ENCODE measurements at regions of chr11 and their contacts with region 1.

Region 1: GRCh38 chr11:8318336-8318935 is 54.8 kb upstream of the LMO1 start:
- DNase-seq: peak; percentile 81
- ATAC-seq: peak; percentile 97
- H3K4me3 Mint-ChIP-seq: no peak overlapping the region
- H3K27ac Mint-ChIP-seq: no peak overlapping the region
- H3K4me1 Mint-ChIP-seq: peaks cover 2% of the 10 kb centered on the region; the same call in 1 of the 2 replicates
- H3K27me3 Mint-ChIP-seq: peaks cover 7% of the 10 kb centered on the region
- CTCF ChIP-seq: peak; percentile 84

Region 2: GRCh38 chr11:8219257-8220021 is 99.0 kb before region 1 on chr11:
- CTCF ChIA-PET with region 1: interaction called, 15 read pairs
- POLR2A ChIA-PET with region 1: no interaction called
- DNase-seq: peak; percentile 75
- ATAC-seq: peak; percentile 92
- H3K4me3 Mint-ChIP-seq: no peak overlapping the region
- H3K27ac Mint-ChIP-seq: no peak overlapping the region
- H3K4me1 Mint-ChIP-seq: peaks cover 12% of the 10 kb centered on the region
- H3K27me3 Mint-ChIP-seq: no peaks in the 10 kb centered on the region; the same call in 1 of the 2 replicates
- CTCF ChIP-seq: peak; percentile 54

Region 3: DNA sequence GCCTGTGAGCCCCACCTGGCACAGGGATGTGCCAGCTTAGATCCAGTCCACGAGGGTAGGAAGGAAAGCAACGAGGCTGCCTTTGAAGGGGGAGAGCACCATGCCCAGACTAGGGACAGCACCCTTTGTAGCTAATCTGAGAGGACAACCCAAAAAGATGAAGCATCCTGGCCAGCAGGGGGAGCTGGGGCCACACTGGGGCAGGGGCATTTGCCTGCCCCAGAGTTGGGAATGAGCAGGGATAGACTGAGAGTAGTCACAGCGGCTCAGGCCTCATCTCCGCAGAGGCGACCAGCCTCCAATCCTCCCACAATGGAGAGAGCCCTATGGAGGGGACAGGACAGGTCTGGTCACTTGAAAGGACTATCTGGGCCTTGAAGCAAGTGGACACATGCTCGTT is 71.1 kb before region 1 on chr11:
- CTCF ChIA-PET with region 1: interaction called, 10 read pairs
- POLR2A ChIA-PET with region 1: no interaction called
- DNase-seq: peak; percentile 74
- ATAC-seq: peak; percentile 43
- H3K4me3 Mint-ChIP-seq: no peak overlapping the region
- H3K27ac Mint-ChIP-seq: no peak overlapping the region
- H3K4me1 Mint-ChIP-seq: peaks cover 13% of the 10 kb centered on the region
- H3K27me3 Mint-ChIP-seq: no peaks in the 10 kb centered on the region; the same call in 1 of the 2 replicates
- CTCF ChIP-seq: peak; percentile 49

Region 4: DNA sequence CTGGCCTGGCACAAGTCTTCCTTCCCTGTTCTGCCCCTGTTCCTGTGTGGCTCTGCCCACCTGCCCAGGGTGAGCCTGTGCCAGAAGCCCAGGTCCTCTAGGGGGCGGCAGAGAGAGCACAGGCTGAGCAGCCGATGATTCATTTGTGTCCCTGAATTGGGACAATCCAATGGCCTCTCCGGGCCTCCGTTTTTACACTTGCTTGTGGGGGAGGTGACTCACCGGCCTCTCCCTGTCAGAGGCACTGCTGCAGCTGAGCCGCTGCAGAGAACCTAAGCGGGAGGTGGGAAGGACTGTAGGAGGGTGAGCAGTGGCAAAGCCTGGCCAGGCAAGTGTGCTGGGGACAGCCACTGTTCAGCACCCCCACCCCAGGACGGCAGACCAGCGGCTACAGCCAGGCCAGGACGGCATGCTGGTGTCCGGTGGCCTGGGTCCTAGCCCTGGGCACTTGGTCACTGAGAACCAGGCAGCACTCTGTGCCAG is 10.5 kb after region 1 on chr11:
- CTCF ChIA-PET with region 1: interaction called, 10 read pairs
- POLR2A ChIA-PET with region 1: interaction called, 7 read pairs
- DNase-seq: peak; percentile 91
- ATAC-seq: peak; percentile 84
- H3K4me3 Mint-ChIP-seq: peak overlapping the region; percentile 42
- H3K27ac Mint-ChIP-seq: no peak overlapping the region
- H3K4me1 Mint-ChIP-seq: peaks cover 37% of the 10 kb centered on the region
- H3K27me3 Mint-ChIP-seq: no peaks in the 10 kb centered on the region
- CTCF ChIP-seq: peak; percentile 80

Region 5: GRCh38 chr11:8624698-8625097 is 306.3 kb after region 1 on chr11:
- CTCF ChIA-PET with region 1: no interaction called
- POLR2A ChIA-PET with region 1: no interaction called
- DNase-seq: no peak
- ATAC-seq: no peak
- H3K4me3 Mint-ChIP-seq: no peak overlapping the region
- H3K27ac Mint-ChIP-seq: no peak overlapping the region
- H3K4me1 Mint-ChIP-seq: no peaks in the 10 kb centered on the region
- H3K27me3 Mint-ChIP-seq: no peaks in the 10 kb centered on the region
- CTCF ChIP-seq: no peak

Measured in WTC11 (cell line).